ENCODE measurements at regions of chr15 and their contacts with region 1.

Region 1: DNA sequence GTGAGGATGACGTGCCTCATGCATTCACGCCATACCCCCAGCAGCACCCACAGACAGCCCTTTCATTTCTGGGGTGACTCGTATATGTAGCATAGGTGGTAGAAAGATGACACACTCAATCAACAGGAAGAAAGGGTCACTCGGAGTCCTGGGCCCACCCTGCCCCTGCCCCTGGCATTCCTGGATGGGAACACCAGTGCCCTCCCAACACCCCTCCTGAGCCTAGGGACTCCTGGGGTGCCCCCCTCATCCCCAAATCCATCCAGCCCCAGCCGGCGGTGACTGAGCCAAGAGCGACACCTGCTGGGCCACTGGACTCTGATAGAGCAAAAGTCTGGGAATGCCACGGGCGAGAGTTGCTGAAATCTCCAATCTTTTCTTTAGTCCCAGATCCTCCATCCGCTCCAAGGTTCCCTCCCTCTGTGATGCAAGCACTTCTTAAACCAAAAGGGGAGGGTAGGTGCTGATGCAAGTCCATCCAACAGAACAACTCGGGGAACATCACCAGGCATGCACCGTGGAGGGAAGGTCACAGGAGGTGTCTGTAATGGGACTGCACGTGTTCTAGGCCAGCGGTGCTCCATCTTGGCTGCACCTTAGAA is 31.1 kb downstream of the ACAN start:
- DNase-seq: no peak
- H3K4me3 ChIP-seq: no peak overlapping the region
- H3K27ac ChIP-seq: no peak overlapping the region
- H3K27me3 ChIP-seq: peaks cover 2% of the 10 kb centered on the region
- CTCF ChIP-seq: peak; percentile 68

Region 2: DNA sequence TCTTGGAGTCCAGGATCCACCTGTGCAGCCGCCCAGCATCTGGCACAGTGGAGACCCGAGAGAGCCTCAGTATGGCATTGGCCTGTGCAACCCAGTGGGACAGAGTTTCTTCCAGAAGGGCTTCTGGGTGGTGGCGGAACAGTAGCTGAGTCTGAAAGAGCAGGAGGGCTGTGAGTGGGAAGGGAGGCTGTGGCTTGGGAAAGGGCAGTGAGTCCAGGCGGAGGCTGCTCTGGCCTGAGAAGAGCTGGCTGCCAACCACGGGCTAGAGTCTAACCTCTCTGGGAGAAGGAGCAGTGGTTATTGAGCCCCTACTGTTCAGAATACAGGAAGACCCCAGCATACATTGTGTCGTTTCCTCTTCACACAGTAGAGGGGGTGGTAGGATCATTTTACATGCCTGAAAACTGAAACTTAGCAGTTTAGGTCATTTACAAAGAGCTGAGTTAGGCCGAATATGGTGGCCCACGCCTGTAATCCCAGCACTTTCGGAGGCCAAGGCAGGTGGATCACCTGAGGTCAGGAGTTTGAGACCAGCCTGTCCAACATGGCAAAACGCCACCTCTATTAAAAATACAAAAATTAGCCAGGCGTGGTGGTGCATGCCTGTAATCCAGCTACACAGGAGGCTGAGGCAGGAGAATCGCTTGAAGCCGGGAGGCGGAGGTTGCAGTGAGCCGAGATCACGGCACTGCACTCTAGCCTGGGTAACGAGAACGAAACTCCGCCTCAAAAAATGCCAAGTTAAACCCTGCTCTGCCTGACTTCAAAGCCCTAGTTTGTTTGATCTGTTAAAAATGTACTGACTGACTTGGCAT is 209.9 kb before region 1 on chr15:
- CTCF ChIA-PET with region 1: interaction called, 17 read pairs
- POLR2A ChIA-PET with region 1: no interaction called
- DNase-seq: no peak
- H3K4me3 ChIP-seq: peak overlapping the region; percentile 94
- H3K27ac ChIP-seq: peak overlapping the region; percentile 65
- H3K27me3 ChIP-seq: no peaks in the 10 kb centered on the region
- CTCF ChIP-seq: peak; percentile 57

Region 3: GRCh38 chr15:88657326-88658069 is 176.8 kb before region 1 on chr15:
- CTCF ChIA-PET with region 1: interaction called, 63 read pairs
- POLR2A ChIA-PET with region 1: interaction called, 3 read pairs
- DNase-seq: no peak
- H3K4me3 ChIP-seq: no peak overlapping the region
- H3K27ac ChIP-seq: no peak overlapping the region
- H3K27me3 ChIP-seq: no peaks in the 10 kb centered on the region
- CTCF ChIP-seq: peak; percentile 89

Region 4: GRCh38 chr15:88752951-88753350 is 81.4 kb before region 1 on chr15:
- CTCF ChIA-PET with region 1: no interaction called
- POLR2A ChIA-PET with region 1: no interaction called
- DNase-seq: no peak
- H3K4me3 ChIP-seq: no peak overlapping the region
- H3K27ac ChIP-seq: no peak overlapping the region
- H3K27me3 ChIP-seq: peaks cover 5% of the 10 kb centered on the region
- CTCF ChIP-seq: no peak